HepG2 (cell line): ENCODE measurements at regions of chr11 and their contacts with region 1.

Region 1: DNA sequence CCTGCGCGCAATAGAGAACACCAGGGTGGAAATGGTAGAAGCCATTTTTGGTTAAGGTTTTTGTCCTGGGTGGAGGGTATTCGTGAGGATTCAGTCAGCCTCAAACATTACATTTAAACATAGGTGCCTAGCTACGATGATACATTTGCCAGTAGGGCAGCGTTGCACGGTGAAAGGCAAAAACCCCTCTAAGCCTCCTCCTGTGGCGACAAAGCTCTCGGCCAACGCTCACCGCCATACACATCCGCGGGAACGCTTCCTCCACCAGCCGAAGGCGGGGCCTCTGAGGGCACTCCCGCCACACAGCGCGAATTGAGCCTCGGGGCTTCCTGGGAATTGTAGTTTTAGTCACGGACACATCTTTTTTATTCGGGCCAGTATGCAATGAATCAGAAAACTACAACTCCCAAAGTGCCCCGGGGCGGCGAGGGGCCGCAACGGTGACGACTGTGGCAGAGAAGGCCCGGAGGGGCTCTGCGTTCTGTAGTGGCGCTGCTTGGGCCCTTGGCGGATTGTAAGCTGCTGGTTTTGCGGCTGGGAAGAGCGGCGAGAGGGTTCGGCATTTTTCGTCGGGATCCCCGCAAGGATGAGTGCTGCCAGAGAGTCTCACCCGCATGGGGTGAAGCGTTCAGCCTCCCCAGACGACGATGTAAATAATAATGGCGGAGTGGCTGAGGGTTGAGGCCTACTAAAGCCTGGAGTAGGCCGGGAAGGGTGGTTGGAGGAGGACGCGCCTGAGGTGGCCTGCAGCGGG is at the start of gene C11orf58:
- DNase-seq: peak; percentile 95
- ATAC-seq: peak; percentile 99
- H3K4me3 ChIP-seq: peak within 1 kb of the TSS; percentile 74 to 92 (median 90)
- H3K27ac ChIP-seq: peak within 1 kb of the TSS; percentile 95
- H3K4me1 ChIP-seq: peaks cover 32% of the 10 kb centered on the region
- H3K27me3 ChIP-seq: no peaks in the 10 kb centered on the region; a peak in 1 of 5 replicates
- CTCF ChIP-seq: no peak; the same call in 1 of the 2 replicates
- EP300 ChIP-seq: 0 out of 4 replicates have a peak, but pooled peaks of 1 of the 2 experiments have one; percentile 13
- POLR2A ChIP-seq: peak; percentile 88 to 96
- RAD21 ChIP-seq: no peak
- total RNA-seq, gene C11orf58: 167 and 271 TPM in 2 replicates

Region 2: DNA sequence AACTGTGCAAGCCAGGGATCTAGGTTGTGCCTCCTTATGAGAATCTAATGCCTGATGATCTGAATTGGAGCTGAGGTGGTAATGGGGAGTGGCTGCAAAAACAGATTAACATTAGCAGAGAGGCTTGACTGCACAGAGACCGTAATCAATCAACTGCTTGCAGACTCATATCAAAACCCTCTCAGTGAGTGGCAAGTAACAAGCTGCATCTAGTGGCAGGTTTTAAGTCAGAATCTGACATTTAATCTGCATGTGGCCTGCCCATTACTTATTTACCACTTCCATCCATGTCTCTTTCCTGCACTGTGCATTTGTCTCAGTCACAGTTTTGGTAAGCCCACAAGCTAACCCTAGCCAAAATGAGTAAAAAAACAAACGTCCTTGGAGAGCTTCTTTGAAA is 11.3 kb after region 1 on chr11:
- CTCF ChIA-PET with region 1: no interaction called
- POLR2A ChIA-PET with region 1: interaction called, 12 read pairs
- in situ Hi-C with region 1: no loop called
- intact Hi-C with region 1: no loop called
- DNase-seq: no peak
- ATAC-seq: no peak
- H3K4me3 ChIP-seq: no peak overlapping the region
- H3K27ac ChIP-seq: no peak overlapping the region
- H3K4me1 ChIP-seq: peaks cover 1% of the 10 kb centered on the region
- H3K27me3 ChIP-seq: no peaks in the 10 kb centered on the region
- CTCF ChIP-seq: no peak
- EP300 ChIP-seq: no peak
- POLR2A ChIP-seq: no peak
- RAD21 ChIP-seq: no peak